AG04449 (cell line): ENCODE measurements at regions of chr17 and their contacts with region 1.

Region 1: DNA sequence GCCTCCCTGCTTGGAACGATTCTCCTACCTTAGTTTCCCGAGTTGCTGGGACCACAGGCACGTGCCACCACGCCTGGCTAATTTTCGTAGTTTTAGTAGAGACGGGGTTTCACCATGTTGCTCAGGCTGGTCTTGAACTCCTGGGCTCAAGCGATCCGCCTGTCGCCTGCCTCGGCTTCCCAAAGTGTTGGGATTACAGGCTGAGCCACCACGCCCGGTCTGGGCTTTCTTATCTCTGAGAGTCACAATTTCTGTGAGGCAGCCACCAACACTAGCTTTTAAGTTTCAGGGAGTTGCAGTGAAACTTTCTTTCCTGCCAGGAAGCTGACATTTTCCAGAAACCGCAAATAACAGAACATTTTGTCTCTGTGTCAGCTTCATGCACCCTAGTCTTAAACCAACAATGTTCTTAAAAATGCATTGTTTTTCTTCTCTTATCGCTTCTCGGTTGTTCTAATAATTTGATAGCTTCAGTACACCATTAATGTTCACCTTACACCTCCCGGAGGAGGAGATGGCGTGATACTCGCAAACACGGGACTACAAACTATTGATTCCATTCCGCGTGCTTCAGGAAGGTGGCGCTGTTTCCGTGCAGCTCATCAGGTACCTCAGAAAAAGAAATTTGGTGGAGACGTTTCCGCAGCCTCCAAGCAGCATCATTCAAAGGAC is 7.4 kb upstream of the DHRS7B start:
- DNase-seq: no peak
- H3K4me3 ChIP-seq: no peak overlapping the region
- CTCF ChIP-seq: peak; percentile 90

Region 2: DNA sequence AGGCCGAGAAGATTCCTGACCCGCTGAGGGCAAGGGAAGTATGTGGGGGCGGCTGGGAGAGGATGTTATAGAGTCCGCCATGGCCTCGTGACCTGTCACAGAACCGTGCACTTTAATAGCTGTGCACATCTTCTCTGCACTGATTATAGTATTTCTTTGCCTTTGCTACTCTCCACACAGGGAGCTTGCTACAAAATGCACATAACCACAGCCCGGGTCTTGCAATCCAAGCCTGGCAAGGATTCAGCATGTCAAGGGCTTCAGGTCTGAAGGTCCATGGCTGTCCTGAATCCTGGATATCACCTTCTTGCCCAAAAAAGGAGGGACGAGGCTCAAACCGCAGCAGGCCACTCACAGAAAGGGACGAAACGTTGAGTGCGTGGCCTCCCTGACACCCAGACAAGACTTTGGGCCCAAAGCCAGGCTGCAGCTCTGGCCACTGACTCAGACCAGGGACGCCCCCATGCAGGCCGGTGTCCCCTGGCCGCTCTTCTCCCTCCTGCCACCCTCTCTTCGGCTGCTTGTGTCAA is 120.3 kb before region 1 on chr17:
- CTCF ChIA-PET with region 1: no interaction called
- POLR2A ChIA-PET with region 1: no interaction called
- DNase-seq: no peak
- H3K4me3 ChIP-seq: no peak overlapping the region
- CTCF ChIP-seq: no peak

Region 3: GRCh38 chr17:21098934-21099689 is 20.3 kb before region 1 on chr17:
- CTCF ChIA-PET with region 1: interaction called, 27 read pairs
- POLR2A ChIA-PET with region 1: no interaction called
- DNase-seq: no peak
- H3K4me3 ChIP-seq: peak overlapping the region; percentile 72
- CTCF ChIP-seq: no peak

Region 4: DNA sequence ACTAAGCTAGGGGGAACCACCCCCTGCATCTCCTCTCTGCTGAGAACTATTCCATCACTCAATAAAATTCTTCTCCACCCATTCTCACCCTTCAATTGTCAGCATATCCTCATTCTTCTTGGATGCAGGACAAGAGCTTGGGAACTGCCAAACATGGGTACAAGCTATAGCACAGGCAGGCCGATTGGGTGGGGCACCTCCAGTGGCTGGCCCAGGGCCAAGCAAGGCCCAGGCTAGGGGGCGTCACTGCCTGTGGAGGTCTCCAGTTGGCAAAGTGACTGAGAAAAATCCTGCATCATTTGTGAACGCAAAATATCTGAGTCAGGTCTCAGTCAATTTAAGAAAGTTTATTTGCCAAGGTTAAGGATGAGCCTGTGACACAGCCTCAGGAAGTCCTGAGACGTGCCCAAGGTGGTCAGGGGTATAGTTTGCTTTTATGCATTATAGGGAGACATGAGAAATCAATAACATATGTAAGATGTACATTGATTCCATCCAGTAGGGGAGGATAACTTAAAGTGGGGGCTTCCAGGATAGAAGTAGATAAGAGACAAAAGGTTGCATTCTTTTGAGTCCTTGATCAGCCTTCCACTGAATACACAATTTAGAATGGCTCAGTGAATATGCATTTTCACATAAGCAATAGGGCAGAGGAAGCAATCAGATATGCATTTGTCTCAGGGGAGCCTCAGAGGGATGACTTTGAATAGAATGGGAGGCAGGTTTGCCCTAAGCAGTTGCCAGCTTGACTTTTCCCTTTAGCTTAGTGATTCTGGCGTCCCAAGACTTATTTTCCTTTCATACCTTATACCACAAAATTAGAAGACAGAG is 14.1 kb before region 1 on chr17:
- CTCF ChIA-PET with region 1: interaction called, 40 read pairs
- POLR2A ChIA-PET with region 1: no interaction called
- DNase-seq: no peak
- H3K4me3 ChIP-seq: no peak overlapping the region
- CTCF ChIP-seq: no peak